CD8-positive, alpha-beta T cell (primary cell): ENCODE measurements at regions of chr18 and their contacts with region 1.

Region 1: DNA sequence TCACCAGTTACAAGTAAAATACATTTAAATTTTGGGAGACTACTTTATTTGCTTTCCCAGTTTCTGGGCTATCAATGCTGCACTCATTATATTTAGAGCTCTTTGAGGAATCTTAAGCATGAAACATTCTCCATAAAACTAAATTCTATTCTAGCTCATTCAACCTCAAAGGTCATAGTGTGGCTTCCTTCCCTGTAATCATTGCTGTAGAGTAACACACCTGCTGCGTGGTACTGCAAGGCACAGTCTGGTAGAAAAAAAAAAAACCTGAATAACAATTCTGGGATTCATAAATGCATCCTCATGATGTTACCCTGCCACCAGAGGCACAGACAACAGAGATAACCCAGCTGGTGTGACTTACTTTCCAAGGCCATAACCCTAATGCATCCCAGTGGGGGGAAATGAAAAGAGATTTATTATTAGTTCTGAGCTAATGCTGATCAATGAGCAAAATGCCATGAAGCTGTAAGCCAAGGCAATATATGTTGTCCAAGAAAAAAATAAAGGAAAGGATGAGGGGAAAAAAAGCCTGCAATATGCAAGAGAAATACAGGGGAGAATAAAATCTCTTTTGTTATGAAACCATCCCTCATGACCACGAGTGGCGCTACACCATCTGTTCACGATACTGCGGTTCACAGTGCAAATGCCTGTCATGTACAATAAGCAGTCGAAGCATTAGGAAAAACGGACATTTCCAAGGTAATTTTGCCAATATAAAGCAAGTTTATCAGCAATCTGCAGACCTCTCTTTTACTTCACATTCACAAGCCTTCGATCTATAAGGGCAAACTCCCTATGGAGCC is 1481.6 kb upstream of the PIK3C3 start:
- DNase-seq: no peak
- ATAC-seq: no peak
- H3K4me3 ChIP-seq: no peak overlapping the region
- H3K4me3 Mint-ChIP-seq: no peak overlapping the region
- H3K27ac ChIP-seq: no peak overlapping the region
- H3K27ac Mint-ChIP-seq: no peak overlapping the region
- H3K4me1 ChIP-seq: no peaks in the 10 kb centered on the region
- H3K4me1 Mint-ChIP-seq: no peaks in the 10 kb centered on the region
- H3K27me3 ChIP-seq: no peaks in the 10 kb centered on the region
- H3K27me3 Mint-ChIP-seq: no peaks in the 10 kb centered on the region
- CTCF ChIP-seq: no peak

Region 2: GRCh38 chr18:40524881-40525280 is 51.5 kb after region 1 on chr18:
- CTCF ChIA-PET with region 1: no interaction called
- POLR2A ChIA-PET with region 1: no interaction called
- intact Hi-C with region 1: loop called in 1 of 2 experiments (anchors 5 kb)
- DNase-seq: no peak
- ATAC-seq: no peak
- H3K4me3 ChIP-seq: no peak overlapping the region
- H3K4me3 Mint-ChIP-seq: no peak overlapping the region
- H3K27ac ChIP-seq: no peak overlapping the region
- H3K27ac Mint-ChIP-seq: no peak overlapping the region
- H3K4me1 ChIP-seq: no peaks in the 10 kb centered on the region
- H3K4me1 Mint-ChIP-seq: no peaks in the 10 kb centered on the region
- H3K27me3 ChIP-seq: no peaks in the 10 kb centered on the region
- H3K27me3 Mint-ChIP-seq: no peaks in the 10 kb centered on the region
- CTCF ChIP-seq: no peak

Region 3: GRCh38 chr18:41170346-41170745 is 696.9 kb after region 1 on chr18:
- CTCF ChIA-PET with region 1: no interaction called
- POLR2A ChIA-PET with region 1: no interaction called
- intact Hi-C with region 1: no loop called
- DNase-seq: no peak
- ATAC-seq: no peak
- H3K4me3 ChIP-seq: no peak overlapping the region
- H3K4me3 Mint-ChIP-seq: no peak overlapping the region
- H3K27ac ChIP-seq: no peak overlapping the region
- H3K27ac Mint-ChIP-seq: no peak overlapping the region
- H3K4me1 ChIP-seq: no peaks in the 10 kb centered on the region
- H3K4me1 Mint-ChIP-seq: no peaks in the 10 kb centered on the region
- H3K27me3 ChIP-seq: no peaks in the 10 kb centered on the region
- H3K27me3 Mint-ChIP-seq: no peaks in the 10 kb centered on the region
- CTCF ChIP-seq: no peak